ENCODE measurements at regions of chr20 and their contacts with region 1.

Region 1: DNA sequence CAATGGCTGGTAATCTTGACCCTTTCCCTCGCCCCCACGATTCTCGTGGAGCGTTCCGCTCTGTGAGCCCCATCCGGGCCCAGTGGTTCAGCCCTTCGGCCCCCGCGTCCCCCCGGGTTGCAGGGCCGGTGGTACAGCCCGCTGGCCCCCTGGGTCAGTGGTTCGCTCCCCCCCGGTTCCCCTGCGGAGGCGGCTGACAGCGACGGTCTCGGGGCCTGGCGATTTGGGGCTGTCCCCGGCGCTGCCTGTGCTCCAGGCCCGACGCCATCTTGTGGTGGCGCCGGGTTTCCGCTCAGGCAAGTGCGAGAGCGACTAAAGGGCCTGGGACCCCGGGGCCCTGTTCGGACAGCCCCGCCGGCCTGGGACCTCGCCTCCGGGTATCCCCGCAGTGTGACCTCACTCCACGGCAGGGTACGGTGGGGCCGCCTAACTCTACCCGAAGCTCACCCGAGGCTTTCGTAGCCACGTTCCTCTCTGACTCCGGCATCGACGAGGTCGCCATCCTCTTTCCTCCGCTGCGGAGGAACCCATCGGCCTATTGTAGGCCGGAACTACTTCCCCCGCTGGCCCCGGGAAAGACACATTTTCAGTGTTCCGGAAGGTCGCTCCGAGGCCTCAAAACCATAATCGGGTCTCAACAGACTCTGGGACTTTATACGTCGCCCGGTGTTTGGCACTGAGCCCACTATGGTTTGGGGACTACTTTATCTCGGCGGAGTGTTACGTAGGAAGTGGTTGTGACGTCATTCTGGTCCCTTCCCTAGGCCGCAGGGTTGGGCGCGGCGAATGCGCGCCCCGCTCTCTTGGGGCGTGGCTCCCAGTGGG is at the start of gene ZNF335:
- DNase-seq: peak; percentile 96 to 98 (median 97)
- ATAC-seq: peak; percentile 92 to 96 (median 94)
- H3K4me3 ChIP-seq: peak within 1 kb of the TSS; percentile 70 to 97 (median 84)
- H3K27ac ChIP-seq: peak within 1 kb of the TSS; percentile 90 to 100 (median 98)
- H3K4me1 ChIP-seq: peaks cover 0 to 35% (median 13%) of the 10 kb centered on the region in 12 donors
- H3K27me3 ChIP-seq: no peaks in the 10 kb centered on the region
- CTCF ChIP-seq: peak; percentile 29 to 71 (median 44)
- POLR2A ChIP-seq: peak in 1 of 2 donors; percentile 66
- total RNA-seq, gene ZNF335: 5.6 to 14.9 (median 8.5) TPM

Region 2: GRCh38 chr20:45798935-45799642 is 172.8 kb before region 1 on chr20:
- intact Hi-C with region 1: loop called in 3 of 10 experiments (anchors 10 kb)
- DNase-seq: peak in 2 of 5 donors; percentile 55 to 59
- ATAC-seq: peak; percentile 48 to 81 (median 76)
- H3K4me3 ChIP-seq: no peak overlapping the region
- H3K27ac ChIP-seq: no peak overlapping the region
- H3K4me1 ChIP-seq: peaks cover 0 to 17% (median 4%) of the 10 kb centered on the region in 12 donors
- H3K27me3 ChIP-seq: no peaks in the 10 kb centered on the region
- CTCF ChIP-seq: peak; percentile 51 to 77 (median 65)
- POLR2A ChIP-seq: no peak

Region 3: DNA sequence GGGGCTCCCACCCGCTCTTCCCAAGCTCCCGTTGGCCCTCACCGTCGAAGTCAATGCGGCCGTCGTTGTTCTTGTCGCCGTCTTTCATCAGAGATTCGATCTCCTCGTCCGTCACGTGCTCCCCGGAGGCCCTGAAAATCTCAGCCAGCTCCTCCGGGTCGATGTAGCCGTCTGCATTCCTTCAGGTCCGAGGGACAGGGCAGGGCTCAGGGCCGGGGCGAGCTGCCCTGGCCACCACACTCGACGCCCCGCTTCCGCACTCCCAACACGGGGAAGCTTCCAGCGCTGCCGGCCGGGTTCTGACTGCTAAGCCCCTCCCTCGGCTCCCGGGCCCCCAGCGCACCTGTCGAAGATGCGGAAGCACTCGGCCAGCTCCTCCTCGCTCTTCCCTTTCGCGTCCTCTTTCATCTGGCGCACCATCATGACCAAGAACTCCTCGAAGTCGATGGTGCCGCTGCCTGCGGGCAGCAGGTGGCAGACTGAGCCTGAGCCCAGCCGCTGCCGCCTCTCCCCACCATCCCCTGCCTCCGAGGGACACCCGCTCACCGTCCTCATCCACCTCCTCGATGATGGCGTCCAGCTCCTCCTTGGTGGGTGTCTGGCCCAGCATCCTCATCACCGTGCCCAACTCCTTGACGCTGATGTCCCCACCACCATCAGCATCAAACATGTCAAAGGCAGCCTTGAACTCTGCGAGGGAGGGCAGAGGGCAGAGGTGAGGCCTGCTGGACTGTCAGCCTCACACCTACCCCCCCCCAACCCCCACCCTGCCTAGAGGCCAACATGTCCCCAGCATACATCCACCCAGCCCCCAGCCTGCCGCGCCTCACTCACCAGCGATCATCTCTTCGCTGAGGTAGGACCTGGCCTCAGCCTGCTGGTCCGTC is 147.7 kb before region 1 on chr20:
- intact Hi-C with region 1: loop called in 4 of 10 experiments (anchors 10 kb)
- DNase-seq: peak in 3 of 5 donors; percentile 44 to 73 (median 53)
- ATAC-seq: peak in 3 of 4 donors; percentile 63 to 72 (median 67)
- H3K4me3 ChIP-seq: peak overlapping the region in 7 of 12 donors; percentile 3 to 28 (median 21)
- H3K27ac ChIP-seq: no peak overlapping the region
- H3K4me1 ChIP-seq: peaks cover 0 to 38% (median 24%) of the 10 kb centered on the region in 12 donors
- H3K27me3 ChIP-seq: peaks cover 2 to 30% (median 19%) of the 10 kb centered on the region in 9 donors
- CTCF ChIP-seq: peak; percentile 18 to 59 (median 42)
- POLR2A ChIP-seq: no peak

Region 4: GRCh38 chr20:45910670-45911485 is 61.0 kb before region 1 on chr20:
- intact Hi-C with region 1: loop called in 1 of 10 experiments (anchors 1 kb)
- DNase-seq: peak; percentile 96 to 97 (median 97)
- ATAC-seq: peak; percentile 82 to 94 (median 92)
- H3K4me3 ChIP-seq: peak overlapping the region; percentile 18 to 67 (median 60)
- H3K27ac ChIP-seq: peak overlapping the region; percentile 42 to 91 (median 80)
- H3K4me1 ChIP-seq: peaks cover 0 to 60% (median 18%) of the 10 kb centered on the region in 12 donors
- H3K27me3 ChIP-seq: peaks cover 0 to 5% (median 0%) of the 10 kb centered on the region in 9 donors
- CTCF ChIP-seq: no peak
- POLR2A ChIP-seq: peak in 1 of 2 donors; percentile 60

Region 5: GRCh38 chr20:46089417-46090388 is 117.8 kb after region 1 on chr20 and contains the start of gene NCOA5:
- intact Hi-C with region 1: loop called in 1 of 10 experiments (anchors 10 kb)
- DNase-seq: peak; percentile 96 to 98 (median 97)
- ATAC-seq: peak; percentile 96 to 98 (median 98)
- H3K4me3 ChIP-seq: peak within 1 kb of the TSS; percentile 52 to 96 (median 86)
- H3K27ac ChIP-seq: peak within 1 kb of the TSS; percentile 94 to 100 (median 98)
- H3K4me1 ChIP-seq: peaks cover 6 to 50% (median 46%) of the 10 kb centered on the region in 12 donors
- H3K27me3 ChIP-seq: no peaks in the 10 kb centered on the region
- CTCF ChIP-seq: peak in 7 of 12 donors; percentile 11 to 56 (median 41)
- POLR2A ChIP-seq: peak in 1 of 2 donors; percentile 70
- total RNA-seq, gene NCOA5: 9.5 to 17.4 (median 12.5) TPM